ENCODE measurements at regions of chr11 and their contacts with region 1.

Region 1: GRCh38 chr11:10735481-10736475 is 15.3 kb upstream of the CTR9 start:
- DNase-seq: peak; percentile 95

Region 2: GRCh38 chr11:10387206-10388083 is 348.3 kb before region 1 on chr11:
- intact Hi-C with region 1: no loop called
- DNase-seq: no peak

Region 3: GRCh38 chr11:10405855-10406592 is 329.8 kb before region 1 on chr11:
- intact Hi-C with region 1: loop called (anchors 2 kb)
- DNase-seq: no peak

Region 4: DNA sequence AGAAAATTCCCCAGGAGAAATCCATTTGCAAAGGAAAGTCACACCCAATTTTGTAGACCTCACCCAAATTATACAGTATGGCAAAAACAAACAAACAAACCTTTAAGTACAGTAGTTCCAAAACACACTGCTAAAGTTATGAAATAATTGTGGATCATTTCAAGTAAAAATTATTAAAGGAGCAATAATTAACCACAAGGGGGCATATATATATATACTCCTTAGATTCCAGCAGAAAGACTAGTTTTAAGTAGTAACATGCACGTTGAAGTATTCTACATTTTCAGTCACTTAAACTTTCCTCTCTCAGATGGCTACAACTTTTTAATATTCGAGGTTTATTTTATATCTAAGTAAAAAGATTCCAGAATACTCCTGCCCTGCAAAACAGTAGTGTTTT is 221.6 kb before region 1 on chr11:
- intact Hi-C with region 1: loop called (anchors 5 kb)
- DNase-seq: no peak

Region 5: GRCh38 chr11:10564696-10565318 is 171.0 kb before region 1 on chr11:
- intact Hi-C with region 1: loop called (anchors 10 kb)
- DNase-seq: no peak

Region 6: GRCh38 chr11:10623797-10624761 is 111.7 kb before region 1 on chr11:
- intact Hi-C with region 1: loop called (anchors 10 kb)
- DNase-seq: no peak

Region 7: DNA sequence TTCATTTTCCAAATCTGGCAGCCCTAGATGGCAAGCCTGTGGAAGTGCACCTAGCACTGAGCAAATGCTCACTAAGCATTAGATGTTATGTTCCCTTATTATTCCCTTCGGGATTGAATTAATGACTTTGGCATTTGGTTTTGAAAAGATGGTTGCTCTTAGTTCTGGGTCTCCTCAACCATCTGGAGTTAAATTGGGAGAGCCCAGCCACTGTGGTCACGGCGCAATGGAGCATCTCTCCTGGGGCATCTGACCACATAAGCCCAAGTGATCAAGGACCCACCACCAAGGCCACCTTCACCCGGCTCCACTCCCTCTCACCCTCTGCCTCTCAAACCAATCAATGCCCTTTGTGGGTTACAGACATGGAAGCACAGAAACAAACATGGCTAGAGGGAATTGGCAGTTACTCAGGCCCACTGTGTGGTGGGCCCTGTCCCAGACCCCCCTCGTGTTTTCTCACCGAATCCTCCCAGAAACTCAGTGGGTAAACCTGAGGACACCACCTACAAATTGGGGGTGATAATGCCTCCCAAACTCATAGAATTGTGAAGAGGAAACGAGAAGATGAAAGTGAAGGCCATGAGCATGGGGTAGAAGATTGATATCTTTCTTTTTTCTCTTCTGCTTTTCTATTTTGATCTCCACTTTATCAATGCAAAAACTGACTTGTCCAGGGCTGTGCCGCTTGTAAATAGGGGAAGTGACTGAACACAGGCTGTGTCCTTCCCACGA is 94.4 kb before region 1 on chr11:
- intact Hi-C with region 1: no loop called
- DNase-seq: no peak

Region 8: GRCh38 chr11:10653926-10654810 is 81.6 kb before region 1 on chr11:
- intact Hi-C with region 1: loop called (anchors 10 kb)
- DNase-seq: no peak